ENCODE measurements at regions of chr17 and their contacts with region 1.

Region 1: DNA sequence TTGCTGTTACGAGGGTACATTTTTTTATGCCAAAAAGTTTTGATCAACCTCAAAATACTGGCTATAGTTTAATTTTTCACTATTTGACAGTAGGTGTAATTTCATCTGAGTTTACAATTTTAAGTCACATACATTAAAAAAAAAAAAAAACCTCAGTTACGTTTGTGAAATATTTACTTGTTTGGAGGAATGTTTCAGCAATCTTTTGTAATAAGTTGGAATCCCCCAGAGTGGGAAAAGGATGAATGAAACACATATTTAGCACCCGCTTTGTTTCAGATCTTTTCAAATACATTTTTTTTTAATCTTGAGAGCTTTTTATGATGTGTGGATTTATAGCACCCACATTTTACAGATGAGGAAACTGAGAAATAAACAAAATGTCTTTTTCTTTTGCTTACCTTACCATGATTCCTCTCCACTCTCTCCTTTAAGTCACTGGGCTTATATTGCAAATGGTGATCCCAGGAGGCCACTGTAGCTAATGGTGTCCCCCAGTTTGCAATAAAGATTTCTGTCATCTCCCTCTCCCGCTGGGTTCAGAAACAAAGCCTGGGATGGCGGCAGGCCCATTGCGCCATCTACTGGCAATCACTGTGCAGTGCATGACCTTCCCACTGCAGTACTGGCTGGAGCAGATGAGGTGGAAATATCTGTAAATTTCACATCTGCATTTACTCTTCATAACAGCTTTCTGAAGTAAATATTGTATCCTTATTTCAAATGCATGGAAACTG is 27.7 kb downstream of the TBC1D3B start:
- DNase-seq: peak; percentile 43 to 55
- ATAC-seq: peak; percentile 65 to 96 (median 89)
- H3K4me3 ChIP-seq: peak overlapping the region in 1 of 10 donors; percentile 15
- H3K27ac ChIP-seq: no peak overlapping the region
- H3K4me1 ChIP-seq: peaks cover 0 to 9% (median 5%) of the 10 kb centered on the region in 9 donors
- H3K27me3 ChIP-seq: peaks cover 0 to 27% (median 0%) of the 10 kb centered on the region in 7 donors
- CTCF ChIP-seq: peak; percentile 89 to 100 (median 98)

Region 2: GRCh38 chr17:35849469-35850348 is 299.0 kb before region 1 on chr17:
- intact Hi-C with region 1: loop called in 1 of 10 experiments (anchors 5 kb)
- DNase-seq: peak in 1 of 2 donors; percentile 38
- ATAC-seq: peak in 5 of 8 donors; percentile 49 to 65 (median 58)
- H3K4me3 ChIP-seq: no peak overlapping the region
- H3K27ac ChIP-seq: no peak overlapping the region
- H3K4me1 ChIP-seq: peaks cover 0 to 9% (median 0%) of the 10 kb centered on the region in 9 donors
- H3K27me3 ChIP-seq: no peaks in the 10 kb centered on the region
- CTCF ChIP-seq: peak; percentile 40 to 80 (median 76)

Region 3: GRCh38 chr17:35969558-35970380 is 179.0 kb before region 1 on chr17:
- intact Hi-C with region 1: loop called (anchors 1 to 10 kb)
- DNase-seq: peak; percentile 29 to 79
- ATAC-seq: peak; percentile 59 to 78 (median 74)
- H3K4me3 ChIP-seq: no peak overlapping the region
- H3K27ac ChIP-seq: no peak overlapping the region
- H3K4me1 ChIP-seq: peaks cover 0 to 28% (median 14%) of the 10 kb centered on the region in 9 donors
- H3K27me3 ChIP-seq: no peaks in the 10 kb centered on the region
- CTCF ChIP-seq: peak; percentile 77 to 90 (median 86)

Region 4: GRCh38 chr17:36089888-36090836 is 58.6 kb before region 1 on chr17 and contains the start of gene CCL3:
- intact Hi-C with region 1: loop called in 1 of 10 experiments (anchors 10 kb)
- DNase-seq: peak in 1 of 2 donors; percentile 32
- ATAC-seq: peak; percentile 57 to 82 (median 74)
- H3K4me3 ChIP-seq: peak within 1 kb of the TSS in 1 of 10 donors; percentile 24
- H3K27ac ChIP-seq: peak within 1 kb of the TSS in 2 of 10 donors; percentile 12 to 65
- H3K4me1 ChIP-seq: peaks cover 0 to 40% (median 0%) of the 10 kb centered on the region in 9 donors
- H3K27me3 ChIP-seq: peaks cover 0 to 19% (median 6%) of the 10 kb centered on the region in 7 donors
- CTCF ChIP-seq: no peak
- total RNA-seq, gene CCL3: 0.24 to 12.3 (median 0.52) TPM in 7 of 10 donors, not detected in the others

Region 5: DNA sequence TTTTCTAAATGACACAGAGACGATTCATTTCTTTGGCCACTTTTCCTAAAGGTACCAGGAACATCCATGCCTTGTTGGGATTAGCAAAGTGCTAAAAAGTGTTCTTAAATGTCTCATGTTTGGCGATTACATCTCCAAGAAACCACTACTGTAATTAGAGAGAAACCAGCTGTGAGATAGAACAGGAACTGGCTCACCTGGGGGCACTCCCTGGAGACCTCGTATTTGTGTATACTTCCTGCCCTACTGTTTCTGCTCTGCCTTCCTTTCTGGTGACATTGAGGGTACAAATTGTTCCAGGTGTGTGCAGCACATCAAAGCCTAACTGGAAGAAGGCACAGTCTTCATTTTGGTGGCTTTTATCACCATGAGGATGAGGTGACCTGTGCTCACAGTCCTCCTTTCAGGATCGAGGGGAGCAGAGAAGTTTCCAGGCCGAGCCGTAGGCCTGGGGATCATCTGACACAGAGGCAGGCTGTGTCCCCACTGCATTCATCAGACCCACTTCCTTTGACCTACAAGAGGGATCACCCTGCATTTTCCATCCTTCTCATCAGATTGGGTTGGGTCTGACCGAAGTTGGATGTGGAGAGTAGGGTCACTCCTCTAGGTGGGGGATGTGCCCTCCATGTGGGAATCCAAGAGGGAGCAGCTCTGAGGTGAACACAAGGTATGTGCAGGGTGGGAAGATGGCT is 21.4 kb before region 1 on chr17:
- intact Hi-C with region 1: loop called in 1 of 10 experiments (anchors 1 kb)
- DNase-seq: no peak
- ATAC-seq: no peak
- H3K4me3 ChIP-seq: no peak overlapping the region
- H3K27ac ChIP-seq: no peak overlapping the region
- H3K4me1 ChIP-seq: peaks cover 0 to 22% (median 0%) of the 10 kb centered on the region in 9 donors
- H3K27me3 ChIP-seq: peaks cover 0 to 9% (median 0%) of the 10 kb centered on the region in 7 donors
- CTCF ChIP-seq: no peak

Region 6: DNA sequence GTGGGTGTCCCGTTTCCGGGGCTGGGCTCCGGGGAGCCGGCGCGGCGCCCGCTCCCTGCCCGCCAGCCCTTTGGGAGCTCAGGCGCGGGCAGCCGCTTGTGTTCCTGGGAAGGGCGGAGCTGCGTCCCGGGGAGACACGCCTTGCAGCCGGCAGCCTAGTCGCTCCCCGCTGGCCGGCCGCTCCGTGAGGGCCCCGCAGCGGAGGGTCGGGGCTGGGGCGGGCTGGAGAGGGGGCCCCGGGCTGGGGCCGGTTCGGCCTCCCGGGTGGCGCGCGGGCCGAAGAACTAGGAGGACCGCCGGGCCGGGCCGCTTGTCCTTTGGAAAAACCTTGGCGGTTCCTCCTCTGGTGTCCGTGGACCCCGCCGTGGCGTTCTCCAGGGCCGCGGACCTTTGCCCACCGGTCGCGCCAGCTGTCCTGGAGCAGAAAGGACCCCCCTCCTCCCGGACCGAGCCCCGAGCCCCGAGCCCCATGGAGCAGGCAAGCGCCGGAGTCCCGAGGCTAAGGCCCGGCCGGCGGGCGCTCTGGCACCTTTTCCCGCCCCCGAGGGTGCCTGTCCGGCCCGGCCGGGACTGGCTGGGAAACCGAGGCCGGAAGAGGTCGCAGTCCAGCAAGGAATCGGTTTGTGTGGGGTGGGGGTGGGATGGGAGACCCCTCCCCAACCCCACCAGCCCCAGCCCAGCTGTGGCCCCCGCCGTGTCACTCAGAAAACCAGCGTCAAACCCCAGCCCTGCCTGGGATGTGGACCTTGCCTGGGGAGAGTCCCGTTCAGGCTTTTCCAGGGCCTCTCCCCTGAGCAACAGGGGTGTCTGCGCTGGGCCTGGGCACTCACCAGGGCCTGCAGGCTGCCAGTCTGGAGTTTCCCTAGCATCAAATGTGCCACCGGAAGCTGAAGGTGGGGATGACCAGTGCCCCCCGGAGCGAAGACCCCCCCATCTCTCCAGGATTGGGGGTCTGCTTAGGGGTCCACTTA is 34.6 kb after region 1 on chr17:
- intact Hi-C with region 1: no loop called
- DNase-seq: peak; percentile 73 to 85
- ATAC-seq: peak; percentile 84 to 91 (median 88)
- H3K4me3 ChIP-seq: peak overlapping the region; percentile 30 to 87 (median 64)
- H3K27ac ChIP-seq: peak overlapping the region in 6 of 10 donors; percentile 51 to 90 (median 70)
- H3K4me1 ChIP-seq: peaks cover 0 to 18% (median 0%) of the 10 kb centered on the region in 9 donors
- H3K27me3 ChIP-seq: peaks cover 0 to 41% (median 7%) of the 10 kb centered on the region in 7 donors
- CTCF ChIP-seq: peak in 3 of 9 donors; percentile 22 to 36 (median 25)

Measured in heart right ventricle (tissue), 16 donors.